Heart right ventricle (tissue), 16 donors: ENCODE measurements at regions of chr14 and their contacts with region 1.

Region 1: GRCh38 chr14:103292426-103293374 is 41.3 kb upstream of the EIF5 start:
- DNase-seq: peak; percentile 77 to 80
- ATAC-seq: peak; percentile 87 to 97 (median 92)
- H3K4me3 ChIP-seq: no peak overlapping the region
- H3K27ac ChIP-seq: no peak overlapping the region
- H3K4me1 ChIP-seq: no peaks in the 10 kb centered on the region
- H3K27me3 ChIP-seq: peaks cover 0 to 29% (median 4%) of the 10 kb centered on the region in 7 donors
- CTCF ChIP-seq: peak; percentile 86 to 96 (median 93)

Region 2: DNA sequence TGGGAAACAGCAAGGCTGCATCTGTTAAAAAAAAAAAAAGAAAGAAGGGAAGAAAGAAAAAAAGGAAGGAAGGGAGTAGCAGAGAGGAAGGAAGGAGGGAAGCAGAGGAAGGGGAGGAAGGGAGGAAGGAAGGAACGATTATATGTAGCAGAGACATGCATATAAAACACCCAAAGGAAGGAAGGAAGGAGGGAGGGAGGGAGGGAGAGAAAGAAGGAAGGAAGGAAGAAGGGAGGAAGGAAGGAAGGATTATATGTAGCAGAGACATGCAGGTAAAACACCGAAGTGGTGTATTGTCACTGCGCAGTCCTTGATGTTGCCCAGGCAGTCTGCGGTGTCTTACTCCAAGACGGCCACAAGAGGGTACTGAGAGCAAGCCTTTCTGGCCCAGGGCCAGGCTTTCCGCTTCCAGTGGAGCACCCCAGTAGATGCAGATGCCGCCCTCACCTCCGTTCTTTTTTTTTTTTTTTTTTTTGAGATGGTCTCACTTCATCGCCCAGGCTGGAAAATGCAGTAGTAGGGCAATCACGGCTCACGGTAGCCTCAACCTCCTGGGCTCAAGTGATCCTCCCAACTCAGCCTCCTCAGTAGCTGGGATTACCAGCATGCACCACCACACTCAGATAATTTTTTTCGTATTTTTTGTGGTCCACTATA is 214.5 kb before region 1 on chr14:
- intact Hi-C with region 1: loop called in 8 of 10 experiments (anchors 1 to 10 kb)
- DNase-seq: peak; percentile 72 to 82
- ATAC-seq: peak in 4 of 8 donors; percentile 25 to 45 (median 38)
- H3K4me3 ChIP-seq: no peak overlapping the region
- H3K27ac ChIP-seq: no peak overlapping the region
- H3K4me1 ChIP-seq: peaks cover 3 to 30% (median 23%) of the 10 kb centered on the region in 9 donors
- H3K27me3 ChIP-seq: peaks cover 0 to 21% (median 3%) of the 10 kb centered on the region in 7 donors
- CTCF ChIP-seq: peak; percentile 39 to 75 (median 70)

Region 3: DNA sequence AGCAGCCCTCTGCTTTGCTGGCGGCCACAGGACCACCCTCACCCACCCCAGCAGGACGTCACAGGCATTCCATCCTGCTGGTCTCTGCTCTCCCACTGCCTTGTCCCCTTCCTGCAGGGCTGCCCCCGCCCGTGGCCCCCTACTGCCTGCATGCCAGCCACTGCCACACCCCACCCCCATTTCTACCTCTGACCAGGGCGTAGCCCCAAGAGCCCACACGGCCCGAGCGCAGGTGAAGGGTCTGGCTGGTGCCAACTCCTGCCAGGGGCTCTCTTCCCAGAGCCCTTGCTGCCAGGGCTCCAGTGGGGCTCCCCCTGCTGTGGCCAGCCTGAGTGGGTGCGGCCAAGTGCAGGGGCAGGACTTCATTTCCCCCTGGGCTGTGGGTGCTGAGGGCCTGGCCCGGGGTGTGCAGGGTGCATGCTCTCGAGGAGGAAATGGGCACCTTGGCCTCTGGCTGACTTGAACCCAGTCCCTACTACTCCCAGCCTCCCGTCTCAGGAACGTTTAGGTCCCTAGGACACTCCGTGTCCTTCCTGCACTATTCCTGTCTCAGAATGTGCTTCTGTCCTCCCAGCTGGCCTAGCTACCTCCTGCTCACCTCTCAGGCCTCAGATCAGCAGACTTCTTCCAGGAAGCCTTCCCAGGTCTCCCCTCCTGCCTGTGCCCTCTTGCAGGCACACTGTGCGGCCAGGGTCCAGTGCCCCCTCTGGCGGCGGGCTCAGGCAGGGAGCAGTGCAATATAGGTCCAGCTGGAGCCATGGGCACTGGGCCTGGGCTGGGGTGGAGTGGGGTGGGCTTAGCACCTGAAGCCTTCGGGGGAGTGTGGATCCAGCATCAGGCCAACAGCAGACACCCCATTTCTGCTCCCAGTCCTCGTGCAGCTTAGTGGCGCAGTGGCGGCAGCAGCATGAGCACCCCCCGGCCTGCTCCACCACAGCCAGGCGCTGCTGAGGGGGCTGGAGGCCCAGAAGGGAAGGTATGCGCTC is 207.3 kb before region 1 on chr14:
- intact Hi-C with region 1: loop called in 1 of 10 experiments (anchors 5 kb)
- DNase-seq: no peak
- ATAC-seq: no peak
- H3K4me3 ChIP-seq: no peak overlapping the region
- H3K27ac ChIP-seq: no peak overlapping the region
- H3K4me1 ChIP-seq: peaks cover 0 to 8% (median 0%) of the 10 kb centered on the region in 9 donors
- H3K27me3 ChIP-seq: peaks cover 0 to 51% (median 42%) of the 10 kb centered on the region in 7 donors
- CTCF ChIP-seq: peak in 3 of 9 donors; percentile 4 to 12 (median 5)

Region 4: DNA sequence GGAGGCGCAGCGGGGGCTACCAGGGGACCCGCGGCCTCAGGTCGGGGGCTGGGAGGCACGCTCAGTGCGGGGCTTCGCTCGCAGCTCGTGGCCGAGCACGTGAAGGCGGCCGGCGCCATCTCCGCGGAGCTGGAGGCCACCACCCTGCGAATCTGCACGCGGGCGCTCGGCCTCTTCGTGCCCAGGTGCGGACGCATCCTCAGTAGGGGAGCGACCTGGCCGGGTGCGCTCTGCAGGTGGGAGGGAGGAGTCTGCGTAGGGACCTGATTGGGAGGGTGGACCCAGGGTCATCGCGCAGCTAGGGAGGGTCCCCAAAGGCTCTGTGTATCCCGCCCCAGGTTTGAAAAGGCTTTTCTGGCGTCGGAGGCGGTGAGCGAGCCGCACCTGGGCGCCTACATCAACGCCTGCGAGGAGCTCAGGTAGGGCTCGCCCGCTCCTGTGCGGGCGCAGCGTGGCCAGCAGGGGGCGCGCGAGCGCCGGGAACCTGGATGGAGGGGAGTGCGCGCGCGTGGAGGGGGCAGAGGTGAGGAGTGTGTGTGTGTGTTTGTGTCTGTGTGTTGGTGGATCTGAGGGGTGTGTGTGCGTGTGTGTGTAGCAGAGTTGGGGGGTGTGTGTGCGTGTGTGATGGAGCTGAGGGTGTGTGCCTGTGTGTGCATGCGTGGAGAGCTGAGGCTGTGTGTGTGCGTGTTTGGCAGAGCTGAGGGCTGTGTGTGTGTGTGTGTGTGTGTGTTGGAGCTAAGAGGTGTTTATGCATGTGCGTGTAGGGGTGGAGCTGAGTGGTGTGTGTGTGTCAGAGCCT is 187.8 kb before region 1 on chr14:
- intact Hi-C with region 1: loop called (anchors 1 to 5 kb)
- DNase-seq: peak; percentile 50 to 75
- ATAC-seq: peak; percentile 72 to 89 (median 82)
- H3K4me3 ChIP-seq: peak overlapping the region in 1 of 10 donors; percentile 11
- H3K27ac ChIP-seq: no peak overlapping the region
- H3K4me1 ChIP-seq: peaks cover 12 to 43% (median 31%) of the 10 kb centered on the region in 9 donors
- H3K27me3 ChIP-seq: peaks cover 34 to 51% (median 49%) of the 10 kb centered on the region in 7 donors
- CTCF ChIP-seq: peak; percentile 91 to 98 (median 96)

Region 5: GRCh38 chr14:103185051-103185992 is 107.4 kb before region 1 on chr14:
- intact Hi-C with region 1: loop called in 9 of 10 experiments (anchors 2 to 10 kb)
- DNase-seq: no peak
- ATAC-seq: no peak
- H3K4me3 ChIP-seq: no peak overlapping the region
- H3K27ac ChIP-seq: no peak overlapping the region
- H3K4me1 ChIP-seq: peaks cover 0 to 12% (median 10%) of the 10 kb centered on the region in 9 donors
- H3K27me3 ChIP-seq: peaks cover 0 to 49% (median 32%) of the 10 kb centered on the region in 7 donors
- CTCF ChIP-seq: peak; percentile 52 to 73 (median 66)

Region 6: DNA sequence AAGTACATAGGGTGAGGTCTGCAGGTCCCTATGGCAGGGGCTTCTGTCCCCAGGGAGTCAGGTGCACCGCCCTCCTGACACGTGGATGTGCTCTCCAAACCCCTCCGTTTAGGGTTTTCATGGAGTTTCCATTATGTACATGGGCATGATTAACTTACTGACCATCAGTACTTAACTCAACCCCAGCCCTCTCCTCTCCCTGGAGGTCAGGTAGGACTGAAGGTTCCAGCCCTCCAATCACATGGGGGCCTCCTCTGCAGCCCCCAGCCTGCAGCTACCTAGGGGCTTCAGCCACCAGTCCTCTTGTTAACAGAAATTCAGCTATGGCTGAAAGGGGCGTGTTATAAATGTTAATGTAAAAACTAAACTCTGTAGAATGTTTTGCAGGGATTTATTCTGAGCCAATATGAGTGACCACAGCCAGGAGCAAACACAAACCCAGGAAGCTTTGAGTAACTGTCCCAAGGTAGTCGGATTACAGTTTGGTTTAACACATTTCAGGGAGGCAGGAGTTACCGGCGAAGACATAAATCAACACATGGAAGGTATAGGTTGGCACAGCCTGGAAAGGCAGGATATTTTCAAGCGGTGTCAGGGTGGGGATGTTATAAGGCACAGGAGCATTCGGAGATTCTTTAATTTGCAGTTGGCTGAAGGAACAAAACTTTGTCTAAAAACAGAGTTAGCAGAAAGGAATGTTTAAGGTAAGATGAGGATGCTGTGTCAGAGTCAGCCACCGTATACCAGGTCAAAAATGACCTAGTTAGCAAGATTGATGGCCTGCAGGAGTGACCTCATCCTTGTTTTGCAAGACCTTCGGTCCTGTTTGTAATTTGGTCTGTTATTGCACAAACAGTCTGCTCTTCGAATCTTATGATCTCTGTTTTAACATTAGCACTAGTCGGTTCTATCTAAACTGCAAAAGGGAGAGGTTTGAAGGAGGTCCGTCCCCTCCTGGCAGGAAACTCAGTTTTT is 94.3 kb before region 1 on chr14:
- intact Hi-C with region 1: loop called in 3 of 10 experiments (anchors 5 to 10 kb)
- DNase-seq: no peak
- ATAC-seq: peak in 5 of 8 donors; percentile 37 to 85 (median 68)
- H3K4me3 ChIP-seq: no peak overlapping the region
- H3K27ac ChIP-seq: peak overlapping the region in 6 of 10 donors; percentile 3 to 55 (median 36)
- H3K4me1 ChIP-seq: peaks cover 0 to 15% (median 0%) of the 10 kb centered on the region in 9 donors
- H3K27me3 ChIP-seq: peaks cover 0 to 4% (median 0%) of the 10 kb centered on the region in 7 donors
- CTCF ChIP-seq: no peak